Esophagus squamous epithelium (tissue), 5 donors: ENCODE measurements at regions of chr3 and their contacts with region 1.

Region 1: DNA sequence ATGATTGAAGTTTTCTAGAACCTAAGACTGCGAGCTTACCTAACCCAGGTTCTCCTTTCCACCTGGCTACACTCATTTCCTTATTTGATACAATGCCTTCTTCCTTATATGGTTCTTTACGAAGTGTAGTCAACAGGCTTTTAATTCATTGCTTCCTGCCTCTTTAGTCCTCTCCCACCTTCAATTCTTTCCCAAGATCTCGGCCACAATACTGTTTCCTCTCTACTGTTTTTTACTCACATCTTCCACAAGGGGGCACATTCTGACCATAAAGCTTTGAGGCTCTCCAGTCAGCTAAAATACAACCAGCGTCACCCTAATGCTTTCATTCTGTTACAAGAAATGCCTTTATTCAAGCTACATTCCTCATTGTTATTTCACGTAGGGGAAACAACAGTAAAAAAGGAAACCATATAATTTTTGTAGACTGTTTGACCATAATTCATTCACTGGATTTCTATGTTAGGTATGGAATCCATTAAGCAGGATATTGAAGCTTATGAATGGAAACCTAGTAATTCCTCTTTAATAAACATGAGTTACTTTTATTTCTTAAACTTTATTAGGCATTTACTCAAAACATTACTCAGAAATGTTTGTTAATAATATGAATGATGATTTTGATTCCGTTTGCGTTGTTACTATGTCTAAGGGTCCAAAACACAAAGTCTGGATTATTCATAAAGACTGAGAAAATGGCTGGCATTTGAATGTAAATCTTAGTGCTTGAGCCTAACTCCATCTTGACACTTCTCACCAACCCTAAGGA is 29.5 kb upstream of the VEPH1 start:
- DNase-seq: no peak
- H3K4me3 ChIP-seq: no peak overlapping the region
- H3K27ac ChIP-seq: no peak overlapping the region
- H3K4me1 ChIP-seq: no peaks in the 10 kb centered on the region
- H3K27me3 ChIP-seq: no peaks in the 10 kb centered on the region
- CTCF ChIP-seq: peak; percentile 21 to 79 (median 64)
- POLR2A ChIP-seq: no peak

Region 2: DNA sequence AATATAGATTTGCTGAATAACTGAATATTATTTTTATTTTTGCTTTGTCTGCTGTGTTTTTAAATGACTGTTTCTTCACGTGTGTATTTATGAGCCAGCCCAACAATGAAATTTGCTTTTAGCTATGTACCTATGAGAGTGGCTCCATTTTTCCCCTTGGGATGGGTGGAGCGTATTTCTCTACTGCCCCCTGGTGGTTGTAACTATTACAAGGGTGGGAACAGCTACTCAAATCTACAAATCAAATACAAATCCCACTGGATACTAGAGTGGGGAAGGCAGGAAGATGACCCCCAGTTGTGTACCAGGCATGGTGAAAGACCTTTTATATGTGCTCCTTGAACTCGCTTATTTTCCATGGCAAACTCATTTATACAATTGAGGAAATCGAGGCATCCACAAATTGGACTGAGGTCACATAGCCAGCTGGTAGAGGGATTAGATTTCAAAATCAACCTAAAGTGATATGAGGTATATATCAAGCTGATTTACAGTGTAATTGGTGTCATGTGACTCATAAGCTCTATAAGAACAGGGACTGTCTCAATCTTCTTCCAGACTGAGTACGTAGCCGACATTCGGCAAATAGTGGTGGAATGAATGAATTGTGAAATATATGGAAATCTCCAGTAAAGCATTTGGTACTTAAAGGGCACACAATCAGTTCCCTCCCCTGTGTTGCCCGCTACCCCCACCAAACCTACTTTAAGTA is 40.0 kb after region 1 on chr3:
- intact Hi-C with region 1: loop called (anchors 2 kb)
- DNase-seq: no peak
- H3K4me3 ChIP-seq: no peak overlapping the region
- H3K27ac ChIP-seq: no peak overlapping the region
- H3K4me1 ChIP-seq: no peaks in the 10 kb centered on the region
- H3K27me3 ChIP-seq: no peaks in the 10 kb centered on the region
- CTCF ChIP-seq: peak; percentile 26 to 78 (median 67)
- POLR2A ChIP-seq: no peak

Region 3: DNA sequence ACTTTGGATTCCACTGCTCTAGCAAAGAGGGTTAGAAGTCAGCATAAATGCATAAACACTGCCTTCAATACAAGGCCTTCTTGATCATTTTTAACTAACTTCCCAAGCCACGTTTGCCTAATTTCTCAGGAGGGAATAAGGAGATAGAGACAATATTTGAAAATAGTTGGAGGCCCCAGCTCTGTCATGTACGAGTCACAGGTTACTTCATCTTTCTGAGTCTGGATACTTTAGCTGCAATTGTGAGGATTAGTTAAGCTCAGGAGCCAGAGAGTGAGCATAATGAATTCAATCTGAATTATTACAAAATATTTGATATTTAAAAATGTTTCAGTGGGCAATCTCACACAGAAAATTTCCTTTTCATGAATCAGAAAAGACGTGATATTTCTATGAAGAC is 274.6 kb after region 1 on chr3:
- intact Hi-C with region 1: no loop called
- DNase-seq: no peak
- H3K4me3 ChIP-seq: no peak overlapping the region
- H3K27ac ChIP-seq: no peak overlapping the region
- H3K4me1 ChIP-seq: no peaks in the 10 kb centered on the region
- H3K27me3 ChIP-seq: no peaks in the 10 kb centered on the region
- CTCF ChIP-seq: no peak
- POLR2A ChIP-seq: no peak